ENCODE measurements at regions of chr16 and their contacts with region 1.

Region 1: DNA sequence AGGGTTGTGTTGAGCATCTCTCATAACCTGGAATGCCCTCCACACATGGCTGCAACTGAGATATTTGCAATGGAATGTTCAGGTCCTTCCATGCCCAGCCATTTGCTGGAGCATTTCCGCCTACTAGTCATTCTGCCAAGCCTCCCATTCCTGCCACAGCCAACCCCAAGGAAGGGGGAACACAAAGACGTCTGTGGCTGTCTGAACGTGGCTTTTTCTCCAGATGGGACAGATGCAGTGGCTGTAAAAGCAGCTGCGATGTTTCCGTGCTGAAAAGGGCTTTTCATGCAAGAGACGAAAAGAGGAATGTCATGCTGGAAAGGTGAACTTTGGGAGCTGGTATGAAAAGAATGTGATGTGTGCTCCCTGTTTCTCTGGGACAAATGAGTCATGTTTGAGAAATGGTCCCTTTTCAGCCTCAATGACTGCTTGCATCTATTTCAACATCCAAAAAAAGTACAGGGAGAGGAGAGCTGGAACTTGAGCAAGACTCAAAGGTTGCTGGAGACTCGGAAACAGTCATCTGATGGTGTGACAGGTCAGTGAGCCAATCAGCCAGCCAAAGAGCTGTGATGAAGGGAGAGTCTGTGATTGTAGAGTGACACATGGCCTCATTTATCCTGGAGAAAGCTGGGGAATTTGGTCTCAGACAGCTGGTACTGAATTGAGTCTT is 208.9 kb downstream of the SHISA9 start:
- DNase-seq: peak; percentile 98
- H3K4me3 ChIP-seq: no peak overlapping the region
- H3K27ac ChIP-seq: peak overlapping the region; percentile 86
- H3K4me1 ChIP-seq: peaks cover 49% of the 10 kb centered on the region
- H3K27me3 ChIP-seq: no peaks in the 10 kb centered on the region
- CTCF ChIP-seq: no peak

Region 2: DNA sequence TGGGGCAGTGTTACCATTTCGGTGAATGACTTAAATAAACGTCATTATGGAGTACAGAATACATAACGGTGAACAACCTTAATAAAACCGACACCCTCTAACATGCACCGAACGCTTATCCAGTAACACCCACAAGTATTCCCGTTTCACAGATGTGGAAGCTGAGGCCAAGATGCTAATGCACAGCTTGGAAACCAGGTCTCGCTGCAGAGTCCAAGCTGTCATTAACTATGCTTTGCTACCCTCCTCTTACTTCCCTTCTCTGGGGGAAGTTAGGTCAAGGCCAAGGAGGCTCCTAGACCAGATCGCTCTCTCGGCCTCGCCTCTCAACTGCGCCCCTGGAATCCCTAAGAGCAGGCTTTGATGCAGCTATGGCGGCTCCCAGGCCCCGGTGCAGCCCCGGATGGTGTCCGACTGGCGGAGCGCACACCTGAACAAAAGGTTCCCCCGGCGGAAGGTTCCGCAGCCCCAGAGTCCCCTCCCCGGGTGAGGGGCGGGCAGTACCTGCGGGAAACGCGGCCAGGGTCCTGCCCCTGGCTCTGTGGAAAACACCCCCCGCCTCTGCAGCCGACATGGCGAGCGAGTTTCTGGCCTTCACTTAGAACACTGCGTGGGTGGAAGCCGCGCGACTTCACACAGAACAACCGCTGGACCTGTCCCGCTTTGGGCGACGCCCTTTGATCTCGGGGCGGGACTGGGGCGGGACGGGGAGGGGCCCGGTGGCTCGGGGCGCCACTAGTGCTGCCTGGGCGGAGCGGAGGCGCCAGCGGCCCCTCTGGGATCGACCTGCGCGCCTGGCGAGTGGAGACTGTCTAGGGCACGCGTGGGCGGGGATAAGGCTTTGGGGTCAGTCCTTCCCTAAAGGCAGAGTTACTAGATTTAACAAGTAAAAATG is 306.8 kb before region 1 on chr16 and contains the start of gene CPPED1:
- CTCF ChIA-PET with region 1: no interaction called
- dilution Hi-C with region 1: no loop called
- in situ Hi-C with region 1: no loop called
- intact Hi-C with region 1: loop called (anchors 10 kb)
- DNase-seq: peak; percentile 94
- H3K4me3 ChIP-seq: peak within 1 kb of the TSS; percentile 46 to 82 (median 73)
- H3K27ac ChIP-seq: peak within 1 kb of the TSS; percentile 45
- H3K4me1 ChIP-seq: peaks cover 9% of the 10 kb centered on the region
- H3K27me3 ChIP-seq: no peaks in the 10 kb centered on the region
- CTCF ChIP-seq: no peak
- total RNA-seq, gene CPPED1: 12.8 to 19.9 TPM

Region 3: DNA sequence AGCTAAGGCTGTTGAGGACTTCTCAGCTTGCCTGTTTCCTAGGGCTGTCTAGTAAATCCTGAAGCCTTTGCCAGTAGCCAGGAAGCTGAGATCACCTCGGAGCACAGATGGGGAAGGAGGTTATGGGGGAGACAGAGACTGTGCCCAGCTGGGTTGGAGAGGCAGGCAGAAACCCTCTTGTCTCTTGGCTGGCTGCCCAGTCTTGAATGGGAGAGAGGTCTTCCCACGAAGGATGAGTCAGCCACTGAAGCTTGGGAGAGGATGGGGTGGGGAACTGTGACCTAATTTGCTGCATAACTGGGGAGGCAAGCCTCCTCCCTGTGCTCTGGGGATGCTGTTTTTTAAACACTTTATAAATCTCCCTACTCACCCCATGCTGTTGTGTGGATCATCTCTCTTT is 139.0 kb before region 1 on chr16:
- CTCF ChIA-PET with region 1: no interaction called
- dilution Hi-C with region 1: loop called (anchors 10 kb)
- in situ Hi-C with region 1: no loop called
- intact Hi-C with region 1: loop called (anchors 5 kb)
- DNase-seq: peak; percentile 95
- H3K4me3 ChIP-seq: no peak overlapping the region
- H3K27ac ChIP-seq: peak overlapping the region; percentile 14
- H3K4me1 ChIP-seq: peaks cover 20% of the 10 kb centered on the region
- H3K27me3 ChIP-seq: no peaks in the 10 kb centered on the region
- CTCF ChIP-seq: no peak

Region 4: DNA sequence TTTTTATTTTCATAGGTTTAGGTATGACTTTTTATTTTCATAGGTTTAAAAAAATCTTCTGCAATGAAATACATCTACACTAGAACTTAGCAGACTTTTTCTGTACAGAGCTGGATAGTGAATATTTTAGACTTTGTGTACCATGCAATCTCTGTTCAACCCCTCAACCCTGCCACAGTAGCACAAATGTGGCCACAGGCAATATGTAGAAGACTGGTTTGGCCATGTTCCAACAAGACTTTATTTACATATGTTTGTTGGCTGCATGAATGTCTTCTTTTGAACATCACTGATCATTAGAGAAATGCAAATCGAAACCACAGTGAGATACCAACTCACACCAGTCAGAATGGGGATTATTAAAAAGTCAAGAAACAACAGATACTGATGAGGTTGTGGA is 20.3 kb after region 1 on chr16:
- CTCF ChIA-PET with region 1: no interaction called
- dilution Hi-C with region 1: no loop called
- in situ Hi-C with region 1: no loop called
- intact Hi-C with region 1: loop called (anchors 2 kb)
- DNase-seq: no peak
- H3K4me3 ChIP-seq: no peak overlapping the region
- H3K27ac ChIP-seq: no peak overlapping the region
- H3K4me1 ChIP-seq: peaks cover 9% of the 10 kb centered on the region
- H3K27me3 ChIP-seq: no peaks in the 10 kb centered on the region
- CTCF ChIP-seq: no peak

Region 5: GRCh38 chr16:13206606-13207005 is 96.3 kb after region 1 on chr16:
- CTCF ChIA-PET with region 1: no interaction called
- dilution Hi-C with region 1: loop called (anchors 5 kb)
- in situ Hi-C with region 1: no loop called
- intact Hi-C with region 1: no loop called
- DNase-seq: no peak
- H3K4me3 ChIP-seq: no peak overlapping the region
- H3K27ac ChIP-seq: no peak overlapping the region
- H3K4me1 ChIP-seq: no peaks in the 10 kb centered on the region
- H3K27me3 ChIP-seq: no peaks in the 10 kb centered on the region
- CTCF ChIP-seq: no peak

Region 6: GRCh38 chr16:13307255-13307654 is 197.0 kb after region 1 on chr16:
- CTCF ChIA-PET with region 1: no interaction called
- dilution Hi-C with region 1: no loop called
- in situ Hi-C with region 1: no loop called
- intact Hi-C with region 1: loop called (anchors 5 kb)
- DNase-seq: peak; percentile 96
- H3K4me3 ChIP-seq: no peak overlapping the region
- H3K27ac ChIP-seq: peak overlapping the region; percentile 57
- H3K4me1 ChIP-seq: peaks cover 37% of the 10 kb centered on the region
- H3K27me3 ChIP-seq: no peaks in the 10 kb centered on the region
- CTCF ChIP-seq: no peak

Measured in mammary epithelial cell (primary cell).